Activated CD4-positive, alpha-beta memory T cell treated with anti-CD3 and anti-CD28 coated beads for 36 hours (primary cell): ENCODE measurements at regions of chr14 and their contacts with region 1.

Region 1: GRCh38 chr14:22852940-22853767 is 16.8 kb downstream of the MMP14 start:
- DNase-seq: peak; percentile 94
- H3K4me3 Mint-ChIP-seq: peak overlapping the region; percentile 72
- H3K27ac Mint-ChIP-seq: peak overlapping the region; percentile 73
- H3K4me1 Mint-ChIP-seq: peaks cover 32% of the 10 kb centered on the region
- H3K27me3 Mint-ChIP-seq: peaks cover 5% of the 10 kb centered on the region

Region 2: GRCh38 chr14:21868442-21869046 is 984.6 kb before region 1 on chr14:
- CTCF ChIA-PET with region 1: no interaction called
- POLR2A ChIA-PET with region 1: no interaction called
- intact Hi-C with region 1: loop called (anchors 10 kb)
- DNase-seq: peak; percentile 89
- H3K4me3 Mint-ChIP-seq: peak overlapping the region; percentile 68
- H3K27ac Mint-ChIP-seq: peak overlapping the region; percentile 82
- H3K4me1 Mint-ChIP-seq: peaks cover 41% of the 10 kb centered on the region
- H3K27me3 Mint-ChIP-seq: no peaks in the 10 kb centered on the region

Region 3: DNA sequence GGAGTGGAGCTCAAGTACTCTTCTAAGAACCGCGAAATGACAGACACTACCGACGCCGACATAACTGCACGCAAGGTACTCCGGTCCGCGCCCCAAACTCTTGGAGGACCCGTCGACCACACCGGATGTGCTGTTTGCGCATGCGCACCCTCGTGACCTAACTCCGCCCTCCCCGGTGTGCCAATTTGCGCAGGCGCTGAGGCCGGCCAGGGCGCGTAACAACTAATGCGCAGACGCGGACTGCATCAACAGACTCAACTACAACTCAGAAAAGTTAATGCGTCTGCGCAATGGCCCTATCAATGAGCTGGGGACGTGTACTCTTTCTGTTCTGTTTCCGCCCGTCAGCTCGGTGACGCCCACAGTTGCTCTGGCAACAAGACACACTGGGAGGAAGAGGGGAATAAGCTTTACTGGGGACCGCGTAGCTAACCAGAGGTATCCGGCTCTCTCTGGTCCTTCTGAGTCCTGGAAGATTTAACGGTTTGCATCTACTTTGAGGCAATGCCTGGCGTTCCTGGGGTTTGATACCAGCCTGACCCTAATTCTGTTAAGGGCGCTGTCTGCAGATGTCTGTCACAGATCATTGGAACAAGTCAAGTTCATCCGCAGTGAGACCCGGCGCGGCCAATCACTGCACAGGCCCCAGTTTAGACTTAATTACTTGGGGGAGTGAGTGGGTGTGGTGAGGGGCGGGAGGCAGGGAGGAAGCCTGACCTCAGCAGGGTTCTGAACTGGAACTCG is 263.9 kb before region 1 on chr14 and contains the start of gene DAD1:
- CTCF ChIA-PET with region 1: interaction called, 6 read pairs
- POLR2A ChIA-PET with region 1: interaction called, 3 read pairs
- intact Hi-C with region 1: loop called (anchors 5 kb)
- DNase-seq: peak; percentile 100
- H3K4me3 Mint-ChIP-seq: peak within 1 kb of the TSS; percentile 99
- H3K27ac Mint-ChIP-seq: peak within 1 kb of the TSS; percentile 100
- H3K4me1 Mint-ChIP-seq: peaks cover 64% of the 10 kb centered on the region
- H3K27me3 Mint-ChIP-seq: peaks cover 5% of the 10 kb centered on the region
- total RNA-seq, gene DAD1: 292 to 305 TPM

Region 4: DNA sequence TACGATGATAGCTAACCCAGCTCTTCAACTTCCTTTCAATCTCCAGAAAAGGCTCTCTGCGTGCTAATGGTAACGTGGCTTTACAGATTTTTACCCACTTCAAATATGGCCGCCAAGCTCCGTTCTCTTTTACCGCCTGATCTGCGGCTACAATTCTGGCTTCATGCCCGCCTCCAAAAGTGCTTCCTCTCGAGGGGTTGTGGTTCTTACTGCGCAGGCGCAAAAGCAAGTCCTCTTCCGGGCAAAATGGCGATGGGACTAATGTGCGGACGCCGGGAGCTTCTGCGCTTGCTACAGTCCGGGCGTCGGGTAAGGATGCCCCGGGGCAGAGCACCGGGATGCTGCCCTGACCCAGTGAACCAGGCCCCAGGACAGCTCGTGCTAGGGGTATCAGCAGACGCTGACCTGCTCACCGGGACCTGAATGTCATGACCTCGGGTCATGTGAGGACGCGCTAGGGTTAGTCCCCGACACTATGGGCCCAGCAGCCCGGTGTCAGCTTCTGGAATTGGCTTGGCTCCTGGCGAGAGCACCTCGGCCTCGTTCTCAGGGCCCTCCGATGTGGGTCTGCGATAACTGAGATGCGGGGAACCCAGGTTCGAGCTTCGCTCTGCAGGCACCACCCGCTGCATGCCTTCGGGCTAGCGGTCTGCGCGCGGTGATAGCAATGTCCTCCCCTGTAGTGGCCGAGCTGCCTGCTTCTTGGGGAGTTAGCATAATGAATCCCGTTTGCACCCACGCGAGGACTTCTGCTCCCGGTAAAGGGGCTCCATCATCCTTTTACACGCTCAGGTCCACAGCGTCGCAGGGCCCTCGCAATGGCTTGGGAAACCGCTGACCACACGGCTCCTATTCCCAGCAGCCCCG is 86.5 kb before region 1 on chr14 and contains the start of gene OXA1L:
- CTCF ChIA-PET with region 1: interaction called, 4 read pairs
- POLR2A ChIA-PET with region 1: no interaction called
- intact Hi-C with region 1: loop called (anchors 2 kb)
- DNase-seq: peak; percentile 98
- H3K4me3 Mint-ChIP-seq: peak within 1 kb of the TSS; percentile 94
- H3K27ac Mint-ChIP-seq: peak within 1 kb of the TSS; percentile 98
- H3K4me1 Mint-ChIP-seq: peaks cover 34% of the 10 kb centered on the region
- H3K27me3 Mint-ChIP-seq: peaks cover 2% of the 10 kb centered on the region
- total RNA-seq, gene OXA1L: 131 to 136 TPM

Region 5: DNA sequence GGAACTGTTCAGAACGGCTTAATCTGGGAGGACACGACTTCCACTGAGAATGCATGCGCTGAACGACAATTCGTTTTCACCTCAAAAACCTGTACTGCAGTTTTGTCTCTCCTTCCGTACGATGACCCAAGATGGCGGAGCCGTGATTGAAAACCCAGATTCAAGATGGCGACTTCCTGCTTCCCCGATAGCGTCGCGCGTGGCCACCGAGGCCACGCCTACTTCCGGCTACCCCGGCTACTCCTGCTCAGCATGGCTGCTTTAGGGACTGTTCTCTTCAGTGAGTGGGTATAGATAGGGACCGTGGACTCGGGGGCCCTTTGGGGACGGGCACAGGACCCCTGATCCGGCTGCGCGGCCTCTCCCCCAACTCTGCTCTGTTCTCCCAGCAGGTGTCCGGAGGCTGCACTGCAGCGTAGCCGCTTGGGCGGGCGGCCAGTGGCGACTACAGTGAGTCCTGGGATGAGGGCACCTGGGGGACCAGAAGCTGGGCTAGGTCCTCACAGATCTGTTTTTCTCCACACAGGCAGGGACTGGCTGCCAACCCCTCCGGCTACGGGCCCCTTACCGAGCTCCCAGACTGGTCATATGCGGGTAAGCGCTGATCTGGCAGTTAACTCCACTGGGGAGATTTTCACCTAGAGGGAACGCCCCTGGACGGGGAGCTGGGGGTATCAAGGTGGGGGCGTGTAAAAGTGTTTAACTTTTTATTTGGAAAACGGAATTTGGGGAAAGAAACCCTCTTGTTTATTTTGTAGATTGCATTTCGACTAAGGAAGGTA is 23.3 kb before region 1 on chr14 and contains the start of gene MRPL52:
- CTCF ChIA-PET with region 1: interaction called, 228 read pairs
- POLR2A ChIA-PET with region 1: interaction called, 10 read pairs
- intact Hi-C with region 1: no loop called
- DNase-seq: peak; percentile 94
- H3K4me3 Mint-ChIP-seq: peak within 1 kb of the TSS; percentile 95
- H3K27ac Mint-ChIP-seq: peak within 1 kb of the TSS; percentile 95
- H3K4me1 Mint-ChIP-seq: peaks cover 26% of the 10 kb centered on the region
- H3K27me3 Mint-ChIP-seq: peaks cover 2% of the 10 kb centered on the region
- total RNA-seq, gene MRPL52: 152 to 156 TPM

Region 6: DNA sequence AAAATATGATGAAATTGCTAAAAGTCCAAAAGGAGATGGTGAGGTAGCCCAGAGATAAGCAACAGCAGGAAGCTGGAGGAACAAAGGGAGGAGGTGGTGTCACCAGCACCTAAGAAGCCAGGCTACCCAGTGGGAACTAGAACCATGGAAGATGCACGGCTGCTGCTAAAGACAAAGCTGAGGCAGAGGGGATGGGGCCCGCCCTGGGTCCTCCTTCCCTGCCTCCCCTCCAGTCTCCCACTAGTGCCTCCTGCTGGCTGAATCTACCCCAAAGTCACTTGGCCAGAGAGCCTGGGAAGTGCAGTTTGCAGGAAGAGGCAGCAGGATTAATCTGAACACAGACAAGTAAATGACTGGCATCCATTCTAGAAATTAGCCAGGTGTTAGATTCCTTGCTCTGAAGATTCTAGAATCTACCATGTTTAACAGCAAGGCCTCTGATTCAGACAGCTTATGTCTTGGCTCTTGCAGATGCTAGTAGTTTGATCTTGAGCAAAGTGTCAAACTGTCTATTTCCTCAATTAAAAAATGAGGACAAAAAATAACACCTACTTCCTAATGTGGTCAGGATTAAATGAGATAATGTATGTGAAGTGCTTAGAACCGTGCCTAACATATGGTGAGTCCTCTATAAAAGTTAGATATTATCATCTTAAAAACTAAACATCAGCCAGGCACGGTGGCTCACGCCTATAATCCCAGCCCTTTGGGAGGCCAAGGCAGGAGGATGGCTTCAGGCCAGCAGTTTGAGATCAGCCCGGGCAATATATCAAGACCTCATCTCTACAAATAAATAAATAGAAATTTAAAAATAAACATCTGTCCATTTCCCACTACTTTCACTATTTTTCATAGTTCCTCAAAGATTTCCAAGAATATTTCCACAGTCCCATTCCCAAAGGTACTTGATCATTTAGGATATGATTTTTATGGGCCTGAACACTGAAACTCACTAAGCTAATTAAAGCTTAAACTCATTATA is 12.6 kb after region 1 on chr14:
- CTCF ChIA-PET with region 1: interaction called, 75 read pairs
- POLR2A ChIA-PET with region 1: interaction called, 3 read pairs
- intact Hi-C with region 1: no loop called
- DNase-seq: peak; percentile 55
- H3K4me3 Mint-ChIP-seq: no peak overlapping the region
- H3K27ac Mint-ChIP-seq: no peak overlapping the region
- H3K4me1 Mint-ChIP-seq: peaks cover 21% of the 10 kb centered on the region
- H3K27me3 Mint-ChIP-seq: peaks cover 3% of the 10 kb centered on the region

Region 7: DNA sequence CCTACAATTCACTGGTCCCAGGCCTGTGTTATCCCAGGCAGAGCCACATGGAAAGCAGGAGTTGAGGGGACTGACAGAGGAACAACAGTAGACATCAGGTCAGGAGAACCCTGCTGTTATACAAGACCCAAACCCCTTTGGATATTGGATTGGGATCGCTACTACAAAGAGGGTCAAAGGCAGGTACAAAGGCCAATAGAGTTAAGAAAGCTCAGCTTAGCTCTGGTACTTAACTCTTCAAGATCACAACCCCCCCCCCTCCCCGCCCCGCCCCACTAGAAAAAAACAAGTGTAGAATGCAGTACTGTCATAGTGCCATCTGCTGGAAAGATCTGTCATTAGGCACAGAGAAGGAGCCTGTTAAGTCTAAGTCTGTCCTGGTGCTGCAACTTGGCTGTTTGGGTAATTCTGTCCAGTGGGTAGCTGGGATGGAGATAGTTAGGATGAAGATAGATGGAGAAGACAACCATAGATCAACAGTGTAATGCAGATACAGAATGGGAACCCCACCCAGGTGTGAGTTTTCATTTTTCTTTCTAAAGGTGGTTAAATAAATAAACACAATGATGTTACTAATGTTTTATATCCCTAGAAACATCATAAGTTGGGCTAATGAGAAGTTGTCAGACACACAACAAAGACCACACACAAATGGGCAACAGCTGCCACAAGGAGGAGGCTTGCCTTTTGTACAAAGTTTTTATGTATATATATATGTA is 47.1 kb after region 1 on chr14:
- CTCF ChIA-PET with region 1: interaction called, 7 read pairs
- POLR2A ChIA-PET with region 1: no interaction called
- intact Hi-C with region 1: loop called (anchors 2 kb)
- DNase-seq: peak; percentile 44
- H3K4me3 Mint-ChIP-seq: no peak overlapping the region
- H3K27ac Mint-ChIP-seq: no peak overlapping the region
- H3K4me1 Mint-ChIP-seq: peaks cover 11% of the 10 kb centered on the region
- H3K27me3 Mint-ChIP-seq: no peaks in the 10 kb centered on the region

Region 8: DNA sequence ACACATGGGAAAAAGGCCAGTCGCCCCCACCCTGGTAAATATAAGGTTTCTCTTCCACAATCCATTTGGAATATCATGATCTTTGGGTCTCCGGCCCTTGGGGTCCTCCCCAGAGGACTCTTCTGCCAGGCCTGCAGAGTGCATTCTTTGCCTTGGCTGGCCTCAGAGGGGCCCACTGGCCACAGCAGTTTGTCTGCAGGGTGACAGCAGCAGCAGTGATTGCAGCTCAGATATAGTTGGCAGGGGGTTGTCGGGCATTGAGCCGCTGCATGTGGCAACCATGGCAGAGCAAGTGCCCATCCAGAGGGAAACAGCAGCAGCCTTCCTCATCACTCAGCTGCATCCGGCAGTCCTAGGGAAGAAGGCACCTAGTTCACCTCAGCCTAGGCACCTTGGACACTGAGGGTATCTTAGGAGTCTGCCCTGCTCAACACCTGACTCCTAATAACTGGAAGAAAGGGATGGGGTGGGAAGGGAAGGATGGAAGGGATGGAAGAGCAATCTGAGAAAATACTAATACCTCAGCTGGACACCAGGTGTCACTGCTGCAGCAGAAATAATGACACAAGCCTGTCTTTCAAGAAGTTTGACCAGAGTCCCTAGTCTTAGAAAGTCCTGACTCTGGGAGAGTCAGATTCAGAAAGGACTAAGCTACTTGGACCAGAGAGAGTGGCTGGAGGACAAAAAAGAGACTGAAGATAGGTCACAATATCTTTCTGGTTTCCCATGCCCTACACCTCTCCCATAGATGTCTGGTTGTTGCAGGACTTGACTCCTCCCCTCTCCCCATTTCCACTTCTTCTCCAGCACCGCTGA is 120.3 kb after region 1 on chr14:
- CTCF ChIA-PET with region 1: no interaction called
- POLR2A ChIA-PET with region 1: no interaction called
- intact Hi-C with region 1: no loop called
- DNase-seq: peak; percentile 55
- H3K4me3 Mint-ChIP-seq: no peak overlapping the region
- H3K27ac Mint-ChIP-seq: no peak overlapping the region
- H3K4me1 Mint-ChIP-seq: no peaks in the 10 kb centered on the region
- H3K27me3 Mint-ChIP-seq: no peaks in the 10 kb centered on the region